IMR-90 (cell line): ENCODE measurements at regions of chr6 and their contacts with region 1.

Region 1: DNA sequence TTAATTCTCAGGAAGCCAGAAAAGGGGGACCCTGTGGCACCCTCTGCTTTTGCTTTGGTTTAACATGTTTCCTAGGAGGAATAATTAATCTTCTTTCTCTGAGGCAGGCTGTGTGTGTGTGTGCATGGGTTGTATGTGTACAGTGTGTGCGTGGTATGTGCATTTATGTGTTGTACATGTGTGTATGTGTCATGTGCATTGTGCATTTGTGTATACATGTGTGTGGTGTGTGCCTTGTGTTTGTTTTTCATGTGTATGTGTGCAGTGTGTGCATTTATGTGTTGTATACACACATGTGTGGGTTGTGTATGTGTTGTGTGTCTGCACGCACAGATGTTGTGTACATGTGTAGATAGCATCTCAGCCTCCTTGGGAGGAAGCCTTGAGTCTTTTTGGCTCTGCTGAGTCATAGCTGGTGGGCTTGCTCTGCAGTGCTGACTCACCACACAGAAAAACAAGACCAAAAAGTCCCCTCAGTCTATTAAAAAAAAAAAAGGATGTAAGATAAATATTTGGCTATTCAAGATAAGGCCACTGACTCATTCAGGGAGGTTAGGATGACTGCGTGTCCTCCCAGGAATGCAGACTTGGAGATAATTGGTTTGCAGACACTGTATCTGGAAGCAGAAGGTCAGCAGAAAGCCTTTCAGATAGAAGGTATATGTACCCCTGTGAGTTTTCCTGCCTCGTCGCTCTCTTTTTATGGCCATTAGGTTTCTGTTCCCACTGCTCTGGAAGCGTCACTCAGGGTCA is 58.6 kb downstream of the SYNJ2 start:
- DNase-seq: peak; percentile 100
- ATAC-seq: peak; percentile 80
- H3K4me3 ChIP-seq: peak overlapping the region; percentile 3; the same call in 1 of the 2 replicates
- H3K27ac ChIP-seq: peak overlapping the region; percentile 97
- H3K4me1 ChIP-seq: peaks cover 43% of the 10 kb centered on the region
- H3K27me3 ChIP-seq: no peaks in the 10 kb centered on the region
- CTCF ChIP-seq: no peak
- POLR2A ChIP-seq: peak; percentile 17; the same call in 1 of the 2 replicates
- RAD21 ChIP-seq: no peak

Region 2: DNA sequence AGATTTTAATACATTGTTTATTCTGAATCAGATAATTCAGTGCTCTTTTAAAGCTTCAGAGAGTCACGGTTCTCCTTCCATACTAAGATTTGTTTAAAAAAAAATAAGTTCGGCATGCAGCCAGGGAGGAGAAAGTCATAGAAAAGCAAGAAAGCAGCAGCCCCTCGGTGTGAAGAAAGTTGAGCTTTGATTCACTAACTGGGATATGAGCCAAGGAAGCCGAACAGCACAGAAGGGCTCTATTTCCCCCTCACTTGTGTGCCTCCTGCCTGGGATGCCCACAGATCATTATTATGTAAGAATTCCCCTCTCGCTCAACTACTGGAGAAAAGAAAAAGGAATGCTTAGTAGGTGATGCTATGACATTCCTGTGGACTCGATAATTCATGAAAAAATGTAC is 127.9 kb before region 1 on chr6:
- CTCF ChIA-PET with region 1: no interaction called
- POLR2A ChIA-PET with region 1: no interaction called
- dilution Hi-C with region 1: no loop called
- in situ Hi-C with region 1: no loop called
- intact Hi-C with region 1: no loop called
- DNase-seq: peak; percentile 95
- ATAC-seq: peak; percentile 89
- H3K4me3 ChIP-seq: no peak overlapping the region
- H3K27ac ChIP-seq: no peak overlapping the region
- H3K4me1 ChIP-seq: peaks cover 7% of the 10 kb centered on the region
- H3K27me3 ChIP-seq: no peaks in the 10 kb centered on the region
- CTCF ChIP-seq: no peak
- POLR2A ChIP-seq: no peak
- RAD21 ChIP-seq: no peak; the same call in 1 of the 2 replicates

Region 3: GRCh38 chr6:157981395-157982296 is 58.6 kb before region 1 on chr6 and contains the start of gene SYNJ2:
- CTCF ChIA-PET with region 1: no interaction called
- POLR2A ChIA-PET with region 1: no interaction called
- dilution Hi-C with region 1: no loop called
- in situ Hi-C with region 1: no loop called
- intact Hi-C with region 1: loop called (anchors 5 kb)
- DNase-seq: peak; percentile 83
- ATAC-seq: peak; percentile 92
- H3K4me3 ChIP-seq: peak within 1 kb of the TSS; percentile 73
- H3K27ac ChIP-seq: peak within 1 kb of the TSS; percentile 65
- H3K4me1 ChIP-seq: peaks cover 31% of the 10 kb centered on the region
- H3K27me3 ChIP-seq: no peaks in the 10 kb centered on the region
- CTCF ChIP-seq: peak; percentile 47
- POLR2A ChIP-seq: peak; percentile 78
- RAD21 ChIP-seq: 0 out of 2 replicates have a peak, but pooled peaks have one; percentile 2
- total RNA-seq, gene SYNJ2: 43.3 and 45.2 TPM in 2 replicates

Region 4: DNA sequence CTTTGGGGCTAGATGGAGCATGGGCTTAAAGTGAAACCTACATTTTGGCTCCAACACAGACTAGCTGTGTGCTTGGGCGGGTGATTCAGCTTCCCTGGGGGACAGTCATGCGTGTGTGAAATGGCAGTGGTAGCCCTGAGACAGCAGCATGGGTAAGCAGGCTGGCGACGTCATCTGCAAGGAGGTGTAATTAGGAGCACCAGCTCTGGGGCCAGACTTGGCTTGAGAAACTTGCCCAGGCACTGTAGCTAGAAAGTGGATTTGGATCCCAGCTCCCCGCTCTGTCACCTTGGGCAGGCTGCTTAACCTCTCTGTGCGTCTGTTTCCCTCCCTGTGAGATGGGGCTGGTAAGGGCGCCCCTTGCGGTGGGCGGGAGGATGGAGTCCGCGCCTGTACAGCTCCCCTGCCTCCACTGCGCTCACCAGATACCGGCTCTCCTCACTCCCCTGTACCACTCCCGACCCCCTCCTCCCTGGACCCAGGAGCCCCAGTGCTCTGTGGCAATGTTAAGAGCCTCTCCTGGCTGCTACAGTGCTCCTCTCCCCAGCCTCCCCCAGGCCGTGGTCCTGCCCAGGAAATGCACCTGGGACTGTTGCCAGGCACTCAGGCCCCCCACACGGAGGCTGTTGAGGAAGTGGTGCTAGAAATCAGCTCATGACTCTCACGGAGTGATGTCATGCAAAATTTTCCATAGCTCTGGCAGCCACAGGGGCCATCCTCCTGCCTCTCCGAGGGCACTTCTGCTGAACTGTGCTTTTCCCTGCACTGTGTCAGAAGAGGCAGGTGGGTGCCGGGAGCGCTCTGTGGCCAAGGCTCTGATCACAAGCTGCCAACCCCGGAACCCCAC is 13.9 kb before region 1 on chr6:
- CTCF ChIA-PET with region 1: interaction called, 5 read pairs
- POLR2A ChIA-PET with region 1: no interaction called
- dilution Hi-C with region 1: no loop called
- in situ Hi-C with region 1: no loop called
- intact Hi-C with region 1: loop called (anchors 2 kb)
- DNase-seq: peak; percentile 99
- ATAC-seq: peak; percentile 70
- H3K4me3 ChIP-seq: no peak overlapping the region
- H3K27ac ChIP-seq: peak overlapping the region; percentile 93
- H3K4me1 ChIP-seq: peaks cover 36% of the 10 kb centered on the region
- H3K27me3 ChIP-seq: no peaks in the 10 kb centered on the region
- CTCF ChIP-seq: peak; percentile 42
- POLR2A ChIP-seq: peak; percentile 62; the same call in 1 of the 2 replicates
- RAD21 ChIP-seq: peak; percentile 3; the same call in 1 of the 2 replicates

Region 5: GRCh38 chr6:158060455-158061360 is 20.5 kb after region 1 on chr6:
- CTCF ChIA-PET with region 1: interaction called, 3 read pairs
- POLR2A ChIA-PET with region 1: interaction called, 3 read pairs
- dilution Hi-C with region 1: no loop called
- in situ Hi-C with region 1: no loop called
- intact Hi-C with region 1: loop called (anchors 2 kb)
- DNase-seq: peak; percentile 94
- ATAC-seq: peak; percentile 79
- H3K4me3 ChIP-seq: no peak overlapping the region
- H3K27ac ChIP-seq: peak overlapping the region; percentile 74
- H3K4me1 ChIP-seq: peaks cover 35% of the 10 kb centered on the region
- H3K27me3 ChIP-seq: no peaks in the 10 kb centered on the region
- CTCF ChIP-seq: no peak
- POLR2A ChIP-seq: 0 out of 2 replicates have a peak, but pooled peaks have one; percentile 66
- RAD21 ChIP-seq: peak; percentile 15; the same call in 1 of the 2 replicates